Activated naive CD4-positive, alpha-beta T cell treated with anti-CD3 and anti-CD28 coated beads, Interleukin-2, amount 10 ng/mL, durations not matched to agents 7 days and 5 days (primary cell): ENCODE measurements at regions of chr17 and their contacts with region 1.

Region 1: DNA sequence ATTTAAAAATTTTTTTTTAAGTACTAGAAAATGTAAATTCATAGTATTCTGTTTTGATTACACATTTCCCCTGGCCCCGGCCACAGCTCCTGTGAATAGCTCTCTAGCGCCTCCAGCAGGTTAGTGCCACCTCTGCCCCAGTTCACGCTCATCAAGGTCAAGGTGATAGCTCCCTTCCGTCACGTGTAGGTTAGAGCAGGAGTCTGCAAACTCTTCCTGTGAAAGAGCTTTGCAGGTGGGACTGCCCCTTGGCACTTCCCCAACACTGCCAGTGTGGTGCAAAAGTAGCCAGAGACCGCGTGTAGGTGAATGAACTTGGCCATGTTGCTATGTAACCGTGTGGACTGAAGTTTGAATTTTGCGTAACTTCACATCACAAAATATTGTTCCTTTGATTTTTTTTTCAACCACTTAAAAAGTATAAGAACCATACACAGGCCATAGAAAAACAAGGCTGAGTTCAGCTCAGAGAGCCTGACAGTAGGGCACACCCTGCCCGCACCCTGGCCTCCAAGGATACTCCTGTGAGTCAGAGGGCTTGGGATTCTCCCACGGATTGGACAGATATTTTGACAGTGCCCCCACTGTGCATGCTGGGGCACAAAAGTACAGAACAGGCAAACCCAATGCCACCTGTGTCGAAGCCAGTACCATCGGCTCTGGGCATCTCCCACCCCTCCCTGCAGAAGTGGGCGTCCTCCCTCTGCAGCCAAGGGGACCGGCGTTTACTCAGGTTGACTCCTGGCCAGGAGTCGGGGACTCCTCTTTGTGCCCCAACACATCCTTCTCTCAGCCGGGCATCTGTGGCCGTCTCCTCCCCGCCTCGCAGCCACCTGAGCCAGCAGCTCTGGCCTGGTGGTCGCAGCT is 92.0 kb upstream of the CHMP6 start:
- DNase-seq: peak; percentile 91
- H3K4me3 Mint-ChIP-seq: no peak overlapping the region
- H3K27ac Mint-ChIP-seq: peak overlapping the region; percentile 80
- H3K4me1 Mint-ChIP-seq: peaks cover 73% of the 10 kb centered on the region
- H3K27me3 Mint-ChIP-seq: no peaks in the 10 kb centered on the region

Region 2: GRCh38 chr17:80832888-80833583 is 66.6 kb before region 1 on chr17:
- CTCF ChIA-PET with region 1: interaction called, 10 read pairs
- DNase-seq: peak; percentile 89
- H3K4me3 Mint-ChIP-seq: peak overlapping the region; percentile 62
- H3K27ac Mint-ChIP-seq: peak overlapping the region; percentile 94
- H3K4me1 Mint-ChIP-seq: peaks cover 75% of the 10 kb centered on the region
- H3K27me3 Mint-ChIP-seq: no peaks in the 10 kb centered on the region

Region 3: GRCh38 chr17:80866147-80866793 is 33.4 kb before region 1 on chr17:
- CTCF ChIA-PET with region 1: interaction called, 30 read pairs
- DNase-seq: peak; percentile 83
- H3K4me3 Mint-ChIP-seq: no peak overlapping the region
- H3K27ac Mint-ChIP-seq: peak overlapping the region; percentile 25
- H3K4me1 Mint-ChIP-seq: peaks cover 89% of the 10 kb centered on the region
- H3K27me3 Mint-ChIP-seq: no peaks in the 10 kb centered on the region

Region 4: GRCh38 chr17:80920441-80920840 is 20.8 kb after region 1 on chr17:
- CTCF ChIA-PET with region 1: no interaction called
- DNase-seq: no peak
- H3K4me3 Mint-ChIP-seq: no peak overlapping the region
- H3K27ac Mint-ChIP-seq: no peak overlapping the region
- H3K4me1 Mint-ChIP-seq: no peaks in the 10 kb centered on the region
- H3K27me3 Mint-ChIP-seq: no peaks in the 10 kb centered on the region